G401 (cell line): ENCODE measurements at regions of chr17 and their contacts with region 1.

Region 1: GRCh38 chr17:82767041-82767754 is 15.3 kb downstream of the TBCD start:
- DNase-seq: peak; percentile 32

Region 2: DNA sequence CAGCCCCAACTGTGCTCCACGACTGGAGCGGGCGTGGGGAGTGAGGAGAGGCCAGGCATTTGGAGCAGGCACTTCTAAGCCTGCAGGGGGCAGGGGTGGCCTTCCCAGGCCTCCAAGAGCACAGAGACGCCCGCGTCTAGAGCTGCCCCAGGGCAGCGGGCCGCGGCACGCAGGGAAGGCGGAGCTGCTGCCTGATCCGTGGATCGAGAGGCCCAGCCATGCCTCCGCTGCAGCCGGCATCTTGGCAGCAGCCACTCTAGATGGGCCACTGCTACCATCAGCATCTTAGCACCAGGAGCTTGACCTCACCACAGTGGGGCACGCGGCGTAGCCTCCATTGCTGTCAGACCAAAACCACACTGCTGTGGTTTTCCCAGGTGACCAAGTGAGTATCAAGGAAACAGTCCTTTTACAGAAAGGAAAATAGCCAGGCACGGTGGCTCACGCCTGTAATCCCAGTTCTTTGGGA is 98.5 kb before region 1 on chr17:
- in situ Hi-C with region 1: loop called (anchors 10 kb)
- DNase-seq: peak; percentile 65

Region 3: GRCh38 chr17:82698065-82698973 is 68.9 kb before region 1 on chr17 and contains the start of gene RAB40B:
- in situ Hi-C with region 1: no loop called
- DNase-seq: peak; percentile 99
- total RNA-seq, gene RAB40B: 28.7 and 37.8 TPM in 2 replicates

Region 4: GRCh38 chr17:82718986-82719685 is 48.1 kb before region 1 on chr17:
- in situ Hi-C with region 1: no loop called
- DNase-seq: no peak